Activated naive CD4-positive, alpha-beta T cell treated with anti-CD3 and anti-CD28 coated beads for 36 hours (primary cell): ENCODE measurements at regions of chr3 and their contacts with region 1.

Region 1: DNA sequence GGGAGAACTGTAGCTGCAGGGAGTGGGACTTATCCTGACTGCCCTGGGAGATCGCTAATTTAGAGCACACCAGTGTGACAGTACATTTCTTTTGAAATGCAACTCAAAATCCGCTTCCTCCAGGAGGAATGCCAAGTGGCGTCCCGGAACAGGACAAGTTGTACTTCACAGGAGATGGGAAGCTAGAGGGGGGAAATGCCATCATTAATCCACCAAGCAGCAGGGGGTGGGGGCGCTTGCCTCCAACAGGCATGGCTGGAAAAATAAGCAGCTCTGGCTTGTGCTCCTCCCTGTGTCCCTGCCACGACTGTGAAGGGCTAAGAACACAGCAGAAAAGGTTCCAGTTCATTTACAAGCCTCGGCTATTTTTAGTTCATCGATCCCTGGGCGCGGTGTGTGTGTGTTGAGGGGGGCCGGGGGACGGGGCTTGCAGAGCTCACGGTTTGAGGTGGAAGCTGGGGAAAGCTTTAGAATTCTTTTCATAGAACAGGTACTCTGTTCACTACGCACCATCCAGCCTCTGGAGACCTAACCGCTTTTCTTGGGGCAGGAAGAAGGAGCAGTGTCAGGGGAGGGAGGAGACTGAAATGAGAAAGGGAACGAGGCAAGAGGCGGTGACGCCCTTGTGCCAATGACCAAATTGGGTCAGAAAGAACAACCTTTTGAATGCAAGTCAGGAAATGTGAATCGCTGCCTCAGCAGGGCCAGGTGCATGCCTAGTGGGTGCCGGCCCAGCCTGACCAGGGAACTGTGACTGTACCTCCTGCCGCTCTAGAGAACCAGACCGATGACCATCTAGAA is 51.8 kb upstream of the DGKG start:
- DNase-seq: peak; percentile 54
- H3K4me3 Mint-ChIP-seq: peak overlapping the region; percentile 56
- H3K27ac Mint-ChIP-seq: no peak overlapping the region
- H3K4me1 Mint-ChIP-seq: peaks cover 42% of the 10 kb centered on the region
- H3K27me3 Mint-ChIP-seq: peaks cover 18% of the 10 kb centered on the region

Region 2: DNA sequence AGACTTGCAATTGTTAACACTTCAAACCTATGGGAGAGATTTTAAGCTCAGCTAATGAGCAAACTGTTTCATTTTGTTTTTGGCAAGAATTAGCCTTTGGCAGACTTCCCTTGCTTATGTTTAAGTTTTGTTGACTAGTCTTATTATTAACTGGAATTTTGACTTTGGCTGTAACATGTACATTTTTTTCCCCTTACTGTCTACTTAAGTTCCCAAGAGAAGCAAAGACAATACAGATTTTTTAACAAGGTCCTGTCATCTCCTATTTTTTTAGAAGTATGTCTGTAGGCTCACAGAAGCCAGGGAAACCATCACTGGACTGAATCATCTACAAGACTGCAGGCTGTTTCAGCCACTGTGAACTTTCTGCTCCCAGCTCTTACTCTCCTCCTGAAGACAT is 126.1 kb before region 1 on chr3:
- CTCF ChIA-PET with region 1: no interaction called
- intact Hi-C with region 1: no loop called
- DNase-seq: no peak
- H3K4me3 Mint-ChIP-seq: no peak overlapping the region
- H3K27ac Mint-ChIP-seq: no peak overlapping the region
- H3K4me1 Mint-ChIP-seq: no peaks in the 10 kb centered on the region
- H3K27me3 Mint-ChIP-seq: no peaks in the 10 kb centered on the region

Region 3: GRCh38 chr3:186425788-186426730 is 12.2 kb after region 1 on chr3:
- CTCF ChIA-PET with region 1: no interaction called
- intact Hi-C with region 1: no loop called
- DNase-seq: no peak
- H3K4me3 Mint-ChIP-seq: no peak overlapping the region
- H3K27ac Mint-ChIP-seq: no peak overlapping the region
- H3K4me1 Mint-ChIP-seq: no peaks in the 10 kb centered on the region
- H3K27me3 Mint-ChIP-seq: no peaks in the 10 kb centered on the region

Region 4: GRCh38 chr3:186514296-186515002 is 100.6 kb after region 1 on chr3:
- CTCF ChIA-PET with region 1: no interaction called
- intact Hi-C with region 1: loop called (anchors 1 kb)
- DNase-seq: peak; percentile 71
- H3K4me3 Mint-ChIP-seq: no peak overlapping the region
- H3K27ac Mint-ChIP-seq: peak overlapping the region; percentile 78
- H3K4me1 Mint-ChIP-seq: peaks cover 79% of the 10 kb centered on the region
- H3K27me3 Mint-ChIP-seq: no peaks in the 10 kb centered on the region